Head of caudate nucleus (tissue), 42 donors: ENCODE measurements at regions of chr20 and their contacts with region 1.

Region 1: DNA sequence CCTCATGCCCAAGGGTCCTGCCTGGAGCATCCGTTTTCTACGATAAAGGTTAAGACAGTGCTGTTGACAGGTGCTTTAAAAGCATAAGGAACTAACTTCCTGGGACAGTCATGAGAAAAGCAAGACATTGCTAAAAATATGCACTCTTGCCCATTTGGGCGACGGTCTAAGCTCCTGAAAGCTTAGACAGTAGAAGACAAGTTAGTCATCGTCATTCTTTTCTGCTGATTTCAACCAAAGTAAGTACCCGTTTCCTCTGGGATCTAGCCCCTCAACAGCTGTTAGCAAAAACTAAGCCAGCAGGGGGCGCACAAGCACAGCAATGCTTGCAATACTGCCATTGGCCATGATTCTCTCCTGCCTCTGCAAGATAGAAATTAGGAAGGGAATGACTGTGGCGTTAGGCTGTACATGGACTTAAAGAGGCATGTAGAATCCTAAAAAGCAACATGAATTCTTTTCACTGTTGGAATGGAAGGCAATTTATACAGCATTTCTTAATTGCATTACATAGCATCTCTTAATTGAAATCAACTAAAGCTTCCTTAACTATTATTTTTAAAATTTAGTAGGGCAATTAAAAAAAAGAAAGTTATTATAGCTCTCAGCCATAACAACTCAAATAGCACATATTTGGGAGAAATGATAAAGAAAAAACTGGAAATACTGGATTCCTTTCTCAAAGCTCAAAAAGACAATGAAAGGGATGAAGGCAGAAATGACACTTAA is 147.8 kb upstream of the RALGAPA2 start:
- DNase-seq: peak; percentile 81 to 99 (median 95)

Region 2: DNA sequence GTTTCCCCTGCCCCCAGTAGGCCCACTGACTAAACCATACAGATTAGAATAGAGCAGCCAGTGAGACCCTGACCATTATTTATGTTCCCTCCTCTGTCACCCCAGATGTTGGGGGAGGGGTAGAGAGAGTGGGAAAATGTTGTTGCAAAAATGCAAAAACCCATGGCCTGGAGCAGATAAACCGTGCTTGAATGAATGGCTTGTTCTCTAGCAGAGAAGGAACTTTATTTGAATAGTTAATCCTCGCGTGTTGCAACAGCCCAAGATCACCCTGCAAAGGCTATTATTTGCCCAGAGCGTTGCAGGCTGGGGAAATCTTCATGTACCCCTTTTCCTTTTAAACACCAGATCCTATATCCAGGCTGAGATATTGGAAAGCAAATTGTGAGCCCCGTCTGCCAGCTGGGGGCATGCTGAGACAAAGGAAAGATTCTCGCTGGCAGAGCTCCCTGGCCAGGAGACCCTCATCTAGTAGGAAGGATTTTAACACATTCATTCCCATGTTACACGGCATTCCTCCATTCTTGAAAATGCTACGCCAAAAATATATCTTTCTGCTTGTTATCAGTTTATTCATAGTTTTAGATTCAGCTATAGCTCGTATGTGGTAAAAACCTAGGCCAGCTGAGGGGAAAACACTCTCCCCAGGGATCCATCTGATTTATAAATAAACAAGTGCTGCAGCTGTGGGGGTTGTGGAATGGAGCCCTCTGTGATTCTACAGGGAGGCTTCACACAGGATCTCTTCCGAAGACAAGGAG is 192.9 kb after region 1 on chr20:
- intact Hi-C with region 1: loop called (anchors 10 kb)
- DNase-seq: peak in 36 of 42 donors; percentile 10 to 76 (median 41)